K562 (cell line): ENCODE measurements at regions of chr1 and their contacts with region 1.

Region 1: GRCh38 chr1:185208626-185209180 is 51.7 kb downstream of the SWT1 start:
- DNase-seq: no peak
- ATAC-seq: no peak
- H3K4me3 ChIP-seq: no peak overlapping the region
- H3K27ac ChIP-seq: no peak overlapping the region
- H3K4me1 ChIP-seq: no peaks in the 10 kb centered on the region; a peak in 1 of 5 replicates
- H3K27me3 ChIP-seq: no peaks in the 10 kb centered on the region
- CTCF ChIP-seq: no peak
- EP300 ChIP-seq: no peak
- POLR2A ChIP-seq: no peak
- RAD21 ChIP-seq: no peak

Region 2: DNA sequence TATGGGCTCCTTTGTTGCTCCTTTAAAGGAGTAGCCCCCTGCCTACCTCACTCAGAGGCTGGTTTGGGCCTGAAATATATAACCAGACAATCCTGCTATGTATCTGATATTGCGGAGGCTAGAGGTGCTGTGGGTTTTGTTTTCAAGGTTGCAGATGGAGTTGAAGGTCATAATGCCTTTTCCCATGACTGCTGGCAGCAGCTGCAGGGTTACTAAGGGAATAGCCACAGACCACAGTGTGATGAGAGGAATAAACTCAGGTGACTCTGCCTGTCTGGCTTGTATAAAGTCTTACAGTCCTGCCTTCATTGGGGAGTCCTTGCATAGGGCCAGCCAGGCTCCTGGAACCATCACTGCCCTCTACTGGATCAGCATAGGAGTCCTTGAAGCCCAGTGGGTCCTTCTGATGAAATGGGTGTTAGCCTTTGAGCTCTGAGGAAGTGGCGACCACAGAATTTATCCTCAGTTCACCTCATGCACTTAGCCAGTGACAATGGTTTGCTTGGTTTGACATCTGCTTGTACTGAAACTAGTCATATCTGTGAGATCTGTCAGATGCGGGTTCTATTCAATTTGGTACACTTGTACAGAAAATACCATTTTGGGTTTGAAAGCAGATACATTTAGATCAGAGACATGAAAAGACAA is 351.1 kb after region 1 on chr1:
- CTCF ChIA-PET with region 1: no interaction called
- POLR2A ChIA-PET with region 1: no interaction called
- in situ Hi-C with region 1: no loop called
- intact Hi-C with region 1: loop called (anchors 10 kb)
- DNase-seq: peak; percentile 24 to 70 (median 46)
- ATAC-seq: peak; percentile 99
- H3K4me3 ChIP-seq: no peak overlapping the region
- H3K27ac ChIP-seq: no peak overlapping the region
- H3K4me1 ChIP-seq: no peaks in the 10 kb centered on the region
- H3K27me3 ChIP-seq: peaks cover 0 to 5% of the 10 kb centered on the region in 2 experiments; a peak in 3 of 5 replicates
- CTCF ChIP-seq: peak; percentile 57 to 67 (median 65)
- EP300 ChIP-seq: no peak
- POLR2A ChIP-seq: no peak
- RAD21 ChIP-seq: peak; percentile 54 to 81

Region 3: GRCh38 chr1:185595835-185596667 is 387.3 kb after region 1 on chr1:
- CTCF ChIA-PET with region 1: no interaction called
- POLR2A ChIA-PET with region 1: no interaction called
- in situ Hi-C with region 1: no loop called
- intact Hi-C with region 1: loop called (anchors 10 kb)
- DNase-seq: peak; percentile 67 to 73 (median 68)
- ATAC-seq: peak; percentile 98
- H3K4me3 ChIP-seq: no peak overlapping the region
- H3K27ac ChIP-seq: no peak overlapping the region
- H3K4me1 ChIP-seq: no peaks in the 10 kb centered on the region
- H3K27me3 ChIP-seq: no peaks in the 10 kb centered on the region
- CTCF ChIP-seq: peak; percentile 67 to 84 (median 70)
- EP300 ChIP-seq: no peak
- POLR2A ChIP-seq: no peak
- RAD21 ChIP-seq: peak; percentile 52 to 74

Region 4: GRCh38 chr1:185670187-185670627 is 461.5 kb after region 1 on chr1:
- CTCF ChIA-PET with region 1: no interaction called
- POLR2A ChIA-PET with region 1: no interaction called
- in situ Hi-C with region 1: no loop called
- intact Hi-C with region 1: loop called (anchors 10 kb)
- DNase-seq: peak in 1 of 4 experiments; percentile 24
- ATAC-seq: peak; percentile 80
- H3K4me3 ChIP-seq: no peak overlapping the region
- H3K27ac ChIP-seq: no peak overlapping the region
- H3K4me1 ChIP-seq: no peaks in the 10 kb centered on the region
- H3K27me3 ChIP-seq: peaks cover 4 to 8% of the 10 kb centered on the region in 2 experiments; a peak in 2 of 5 replicates
- CTCF ChIP-seq: peak; percentile 17 to 48 (median 42); a peak in 4 of 6 replicates
- EP300 ChIP-seq: no peak
- POLR2A ChIP-seq: no peak
- RAD21 ChIP-seq: peak; percentile 61 to 64